ENCODE measurements at regions of chr14 and their contacts with region 1.

Region 1: GRCh38 chr14:32073537-32074189 is 3.4 kb upstream of the ARHGAP5 start:
- DNase-seq: no peak
- ATAC-seq: no peak

Region 2: DNA sequence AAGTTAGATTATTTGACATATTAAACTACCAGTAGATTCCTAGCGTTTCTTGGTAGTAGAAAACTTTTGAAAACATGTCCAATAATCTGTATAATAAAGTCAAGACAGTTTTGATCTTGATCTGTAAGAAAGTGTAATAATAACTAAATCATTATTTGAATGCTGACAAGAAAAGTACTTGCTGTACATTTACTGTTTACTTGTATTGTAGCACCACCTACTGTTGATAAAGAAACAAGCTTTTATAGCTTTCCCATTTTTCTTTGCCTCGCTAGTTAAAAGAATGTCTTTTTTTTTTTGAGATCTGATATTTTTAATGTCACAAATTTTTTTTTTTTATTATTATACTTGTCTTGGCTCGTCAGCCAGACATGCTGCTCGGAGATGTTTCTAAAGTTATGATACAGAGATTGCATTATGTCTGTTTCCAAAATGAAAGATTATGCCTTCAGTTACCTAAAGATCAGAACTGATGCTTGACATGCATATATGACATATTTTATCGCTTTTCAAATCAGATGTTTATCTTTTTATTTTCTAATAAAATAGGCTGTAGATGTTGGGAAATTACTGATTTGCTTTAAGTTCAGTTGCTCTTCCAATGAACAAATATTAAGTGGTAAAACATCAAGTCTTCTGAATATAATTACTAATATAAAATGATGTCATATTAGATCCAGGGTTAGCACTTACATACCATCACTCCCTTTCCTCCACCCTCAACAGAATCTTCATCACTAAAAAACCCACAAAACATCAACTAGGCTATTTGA is 395.9 kb after region 1 on chr14:
- intact Hi-C with region 1: loop called (anchors 5 kb)
- DNase-seq: no peak
- ATAC-seq: peak; percentile 36

Measured in left ventricle myocardium superior (tissue), 1 donor.